Activated CD4-positive, alpha-beta T cell treated with anti-CD3 and anti-CD28 coated beads, Interleukin-2, amount 10 ng/mL, durations not matched to agents 7 days and 5 days (primary cell): ENCODE measurements at regions of chr5 and their contacts with region 1.

Region 1: DNA sequence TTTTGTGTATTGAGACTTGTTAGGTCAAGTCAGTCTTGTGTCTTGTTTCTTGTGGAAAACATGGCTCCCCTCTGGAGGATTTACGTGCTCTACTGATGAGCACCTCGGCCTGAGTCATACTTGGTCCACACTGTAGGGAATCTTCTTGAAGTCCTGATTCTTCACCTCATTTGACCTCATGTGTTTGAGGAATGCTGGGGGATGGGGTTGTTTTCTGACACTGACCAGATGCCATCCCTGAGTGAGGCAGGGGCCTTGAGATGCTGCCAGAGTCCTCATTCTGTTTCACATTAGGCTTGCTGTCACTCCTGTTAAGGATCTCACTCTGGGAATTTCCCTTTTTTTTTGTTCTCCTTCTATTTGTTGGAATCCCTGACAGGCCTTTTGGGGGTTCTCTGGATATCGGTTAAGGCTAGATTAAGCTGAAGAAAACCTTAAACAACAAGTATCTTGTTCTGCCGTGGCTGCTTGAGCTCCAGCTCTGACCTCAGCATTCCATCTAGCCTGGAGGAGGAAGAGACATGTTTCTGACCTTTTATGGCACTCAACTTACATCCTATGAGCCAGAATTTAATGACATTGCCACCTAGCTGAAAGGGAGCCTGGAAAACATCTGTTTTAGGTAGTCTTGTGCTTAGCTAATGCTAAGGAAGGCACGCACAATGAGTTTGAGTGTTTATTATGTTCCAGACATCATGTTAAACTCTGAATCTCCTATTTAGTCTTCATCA is 20.6 kb downstream of the TCOF1 start:
- DNase-seq: no peak
- H3K4me3 Mint-ChIP-seq: no peak overlapping the region
- H3K27ac Mint-ChIP-seq: no peak overlapping the region
- H3K4me1 Mint-ChIP-seq: no peaks in the 10 kb centered on the region
- H3K27me3 Mint-ChIP-seq: no peaks in the 10 kb centered on the region

Region 2: GRCh38 chr5:150361301-150361700 is 16.8 kb before region 1 on chr5:
- CTCF ChIA-PET with region 1: interaction called, 11 read pairs
- POLR2A ChIA-PET with region 1: no interaction called
- DNase-seq: no peak
- H3K4me3 Mint-ChIP-seq: no peak overlapping the region
- H3K27ac Mint-ChIP-seq: no peak overlapping the region
- H3K4me1 Mint-ChIP-seq: peaks cover 41% of the 10 kb centered on the region
- H3K27me3 Mint-ChIP-seq: no peaks in the 10 kb centered on the region

Region 3: GRCh38 chr5:150389531-150390266 is 11.6 kb after region 1 on chr5:
- CTCF ChIA-PET with region 1: interaction called, 16 read pairs
- POLR2A ChIA-PET with region 1: no interaction called
- DNase-seq: no peak
- H3K4me3 Mint-ChIP-seq: no peak overlapping the region
- H3K27ac Mint-ChIP-seq: peak overlapping the region; percentile 50
- H3K4me1 Mint-ChIP-seq: no peaks in the 10 kb centered on the region
- H3K27me3 Mint-ChIP-seq: no peaks in the 10 kb centered on the region

Region 4: DNA sequence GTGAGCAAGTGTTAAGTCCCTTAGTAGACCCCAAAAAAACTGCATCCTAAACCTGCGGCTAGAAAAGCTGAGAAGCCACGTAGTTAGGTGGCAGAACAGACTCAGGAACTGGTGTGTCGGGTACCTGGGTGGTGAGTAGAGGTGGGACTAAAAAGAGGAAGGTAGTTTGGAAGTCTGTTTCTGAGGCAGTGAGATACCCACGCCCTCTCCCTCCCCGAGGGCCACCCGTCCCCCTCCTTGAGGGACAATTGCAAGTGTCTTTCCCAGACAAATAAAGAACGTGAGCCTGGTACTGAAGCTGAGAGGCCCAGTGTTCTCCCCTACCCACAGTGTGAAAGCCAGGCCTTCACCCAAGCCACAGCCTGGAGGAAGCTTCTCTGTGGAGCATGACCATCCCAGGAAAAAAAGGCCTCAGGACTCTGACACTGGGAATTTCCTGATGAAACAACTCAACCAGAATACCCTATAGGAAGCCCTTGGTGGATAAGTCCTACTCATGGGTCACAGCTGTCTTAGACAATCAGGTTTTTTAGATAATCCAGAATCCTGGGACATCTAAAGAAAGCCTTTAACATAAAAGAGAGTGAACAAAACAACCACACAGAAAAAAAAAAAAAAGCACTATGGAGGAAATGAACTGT is 41.6 kb after region 1 on chr5:
- CTCF ChIA-PET with region 1: no interaction called
- POLR2A ChIA-PET with region 1: no interaction called
- DNase-seq: no peak
- H3K4me3 Mint-ChIP-seq: no peak overlapping the region
- H3K27ac Mint-ChIP-seq: no peak overlapping the region
- H3K4me1 Mint-ChIP-seq: peaks cover 5% of the 10 kb centered on the region
- H3K27me3 Mint-ChIP-seq: peaks cover 4% of the 10 kb centered on the region